Heart left ventricle (tissue), 16 donors: ENCODE measurements at regions of chr3 and their contacts with region 1.

Region 1: DNA sequence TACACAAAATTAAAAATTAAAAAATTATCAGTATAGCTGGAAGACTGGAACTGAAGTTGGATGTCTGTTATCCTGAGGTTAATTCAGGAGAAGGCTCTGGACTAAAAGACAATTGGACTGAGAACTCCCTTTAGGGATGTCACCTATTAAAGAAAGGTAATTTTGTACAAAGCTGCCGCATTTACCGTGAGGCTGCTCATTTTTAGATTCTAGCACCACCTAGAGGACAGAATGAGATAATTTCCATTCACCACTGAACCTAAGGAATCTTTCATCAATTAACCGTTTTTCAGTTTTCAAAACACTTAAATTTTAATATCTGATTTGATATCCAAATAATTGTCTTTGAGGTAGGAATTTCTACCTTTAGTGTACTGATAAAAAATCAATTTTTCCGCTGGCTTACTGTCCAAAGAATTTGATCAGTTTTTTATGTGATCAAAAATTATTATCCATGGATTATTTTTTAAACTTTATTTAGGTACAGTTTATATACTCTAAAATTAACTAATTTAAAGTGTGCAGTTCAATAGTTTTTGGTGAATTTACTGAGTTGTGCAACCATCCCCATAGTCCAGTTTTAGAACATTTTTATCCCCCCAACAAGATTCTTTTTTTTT is 106.7 kb upstream of the TNIK start:
- DNase-seq: no peak
- ATAC-seq: peak in 2 of 4 donors; percentile 37 to 44
- H3K4me3 ChIP-seq: no peak overlapping the region
- H3K27ac ChIP-seq: no peak overlapping the region
- H3K4me1 ChIP-seq: peaks cover 0 to 26% (median 8%) of the 10 kb centered on the region in 12 donors
- H3K27me3 ChIP-seq: no peaks in the 10 kb centered on the region
- CTCF ChIP-seq: peak; percentile 62 to 85 (median 76)
- POLR2A ChIP-seq: no peak

Region 2: GRCh38 chr3:171049861-171050444 is 517.0 kb before region 1 on chr3:
- intact Hi-C with region 1: loop called (anchors 1 to 5 kb)
- DNase-seq: peak in 4 of 5 donors; percentile 16 to 40 (median 30)
- ATAC-seq: peak in 3 of 4 donors; percentile 68 to 83 (median 80)
- H3K4me3 ChIP-seq: no peak overlapping the region
- H3K27ac ChIP-seq: no peak overlapping the region
- H3K4me1 ChIP-seq: peaks cover 0 to 2% (median 0%) of the 10 kb centered on the region in 12 donors
- H3K27me3 ChIP-seq: no peaks in the 10 kb centered on the region
- CTCF ChIP-seq: peak; percentile 41 to 68 (median 55)
- POLR2A ChIP-seq: no peak

Region 3: DNA sequence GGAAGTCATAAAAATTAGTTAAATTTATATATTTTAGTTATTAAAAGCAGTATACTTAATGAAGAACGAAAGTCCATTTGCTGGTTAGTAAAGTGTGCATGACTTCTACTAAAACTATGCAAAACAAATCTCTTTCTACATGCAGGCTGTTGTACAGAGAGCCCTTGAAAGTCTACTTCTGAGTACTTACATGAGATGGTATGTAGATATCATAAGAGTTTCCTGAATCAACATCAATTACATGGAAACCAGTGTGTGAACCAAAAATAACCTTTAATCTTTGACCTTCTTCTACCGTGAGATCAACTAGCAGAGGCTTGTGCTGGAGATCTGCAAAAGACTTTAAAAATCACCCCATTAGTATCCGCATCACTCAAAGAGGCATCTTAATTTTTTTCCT is 498.3 kb before region 1 on chr3:
- intact Hi-C with region 1: no loop called
- DNase-seq: no peak
- ATAC-seq: no peak
- H3K4me3 ChIP-seq: no peak overlapping the region
- H3K27ac ChIP-seq: no peak overlapping the region
- H3K4me1 ChIP-seq: peaks cover 0 to 6% (median 0%) of the 10 kb centered on the region in 12 donors
- H3K27me3 ChIP-seq: no peaks in the 10 kb centered on the region
- CTCF ChIP-seq: no peak
- POLR2A ChIP-seq: no peak

Region 4: GRCh38 chr3:171162986-171163723 is 403.8 kb before region 1 on chr3:
- intact Hi-C with region 1: loop called in 4 of 10 experiments (anchors 10 kb)
- DNase-seq: no peak
- ATAC-seq: no peak
- H3K4me3 ChIP-seq: no peak overlapping the region
- H3K27ac ChIP-seq: no peak overlapping the region
- H3K4me1 ChIP-seq: peaks cover 0 to 2% (median 0%) of the 10 kb centered on the region in 12 donors
- H3K27me3 ChIP-seq: no peaks in the 10 kb centered on the region
- CTCF ChIP-seq: peak in 11 of 12 donors; percentile 13 to 62 (median 37)
- POLR2A ChIP-seq: no peak

Region 5: DNA sequence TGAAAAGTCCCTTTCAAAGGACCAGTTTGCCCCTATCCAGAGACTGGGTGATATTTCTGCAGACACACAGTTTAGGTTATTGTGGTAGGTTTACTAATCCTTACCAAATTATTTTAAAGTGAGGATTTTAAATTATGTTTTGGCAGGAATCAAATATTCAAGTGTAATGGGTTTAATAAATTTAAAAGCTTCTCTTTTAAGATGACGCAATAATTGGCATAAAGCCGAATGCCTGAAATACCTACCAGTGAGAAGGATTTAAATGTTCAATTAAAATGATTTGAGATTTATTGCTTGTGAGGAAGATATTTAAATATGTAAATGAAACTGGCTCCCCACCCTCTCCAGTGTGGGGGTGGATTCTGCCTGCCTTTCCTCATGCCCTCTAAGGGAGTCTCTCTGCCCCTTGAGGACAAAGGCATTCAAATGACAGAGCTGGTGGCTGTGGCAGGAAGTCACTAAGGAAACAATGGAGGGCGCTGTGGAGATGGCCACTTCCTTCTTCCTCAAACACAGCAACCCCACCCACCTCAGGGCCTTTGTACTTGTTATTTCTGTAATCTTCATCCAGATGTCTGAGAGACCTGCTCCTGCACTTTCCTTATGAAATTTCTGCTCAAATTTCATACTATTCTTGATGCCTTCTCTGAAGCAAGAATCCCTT is 238.4 kb before region 1 on chr3:
- intact Hi-C with region 1: loop called in 3 of 10 experiments (anchors 10 kb)
- DNase-seq: peak in 1 of 5 donors; percentile 38
- ATAC-seq: peak in 3 of 4 donors; percentile 27 to 47 (median 44)
- H3K4me3 ChIP-seq: no peak overlapping the region
- H3K27ac ChIP-seq: peak overlapping the region in 2 of 12 donors; percentile 3 to 36
- H3K4me1 ChIP-seq: peaks cover 0 to 69% (median 38%) of the 10 kb centered on the region in 12 donors
- H3K27me3 ChIP-seq: no peaks in the 10 kb centered on the region
- CTCF ChIP-seq: peak in 1 of 12 donors; percentile 9
- POLR2A ChIP-seq: no peak

Region 6: DNA sequence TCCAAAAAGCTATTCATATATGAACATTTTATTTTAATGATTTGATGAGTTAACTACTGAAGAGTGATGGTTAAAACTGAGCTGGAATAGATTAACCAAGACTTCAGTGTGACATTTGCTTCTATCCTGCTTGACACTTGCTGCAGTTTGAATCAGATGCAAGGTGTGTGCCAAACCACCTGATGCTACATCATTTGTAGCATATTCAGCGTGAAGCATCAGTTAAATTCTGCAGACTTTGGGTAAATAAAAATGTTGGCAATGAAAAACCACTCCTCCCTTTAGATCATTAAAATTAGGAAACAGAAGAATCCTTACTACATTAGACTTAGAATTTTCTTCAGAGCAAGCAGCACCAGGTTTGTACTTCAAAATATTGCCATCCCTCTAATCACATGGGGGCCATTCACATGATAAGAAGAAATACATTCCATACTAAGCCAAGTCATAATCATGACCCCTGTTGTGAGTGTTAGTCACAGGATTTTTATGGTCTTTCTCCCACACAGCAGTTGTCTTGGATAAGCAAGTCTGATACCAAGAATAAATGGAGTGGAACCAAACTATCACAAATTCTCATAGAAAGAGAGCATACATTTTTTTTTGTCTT is 54.0 kb after region 1 on chr3:
- intact Hi-C with region 1: no loop called
- DNase-seq: no peak
- ATAC-seq: no peak
- H3K4me3 ChIP-seq: no peak overlapping the region
- H3K27ac ChIP-seq: no peak overlapping the region
- H3K4me1 ChIP-seq: peaks cover 0 to 10% (median 0%) of the 10 kb centered on the region in 12 donors
- H3K27me3 ChIP-seq: no peaks in the 10 kb centered on the region
- CTCF ChIP-seq: no peak
- POLR2A ChIP-seq: no peak